HepG2 (cell line): ENCODE measurements at regions of chr5 and their contacts with region 1.

Region 1: GRCh38 chr5:62521319-62521718 is 57.3 kb upstream of the LRRC70 start:
- DNase-seq: no peak
- ATAC-seq: no peak
- H3K4me3 ChIP-seq: no peak overlapping the region
- H3K27ac ChIP-seq: no peak overlapping the region
- H3K4me1 ChIP-seq: no peaks in the 10 kb centered on the region
- H3K27me3 ChIP-seq: no peaks in the 10 kb centered on the region
- CTCF ChIP-seq: no peak
- EP300 ChIP-seq: no peak
- POLR2A ChIP-seq: no peak
- RAD21 ChIP-seq: no peak

Region 2: DNA sequence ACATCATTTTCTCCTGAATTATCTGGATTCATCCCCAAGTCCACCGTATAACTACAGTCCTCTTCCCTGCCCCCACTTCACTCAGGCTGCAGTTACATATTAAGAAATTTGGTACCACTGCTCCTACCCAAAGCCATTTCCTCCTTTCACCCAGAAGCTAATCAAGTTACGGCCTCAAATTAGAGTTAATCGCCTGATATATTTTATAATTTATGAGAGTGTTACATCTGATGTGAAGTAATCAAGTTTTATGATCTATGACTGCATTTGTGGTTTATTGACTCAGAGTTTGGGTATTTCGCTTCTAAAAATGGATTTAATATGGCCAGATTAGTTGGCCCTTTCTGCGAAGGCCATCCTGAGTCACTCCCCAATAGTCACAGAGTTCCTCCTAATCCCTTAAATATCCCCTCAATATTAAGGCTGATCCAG is 438.9 kb before region 1 on chr5:
- CTCF ChIA-PET with region 1: no interaction called
- POLR2A ChIA-PET with region 1: no interaction called
- in situ Hi-C with region 1: no loop called
- intact Hi-C with region 1: no loop called
- DNase-seq: no peak
- ATAC-seq: no peak
- H3K4me3 ChIP-seq: no peak overlapping the region
- H3K27ac ChIP-seq: no peak overlapping the region
- H3K4me1 ChIP-seq: no peaks in the 10 kb centered on the region
- H3K27me3 ChIP-seq: peaks cover 3 to 30% of the 10 kb centered on the region in 2 experiments; a peak in 3 of 5 replicates
- CTCF ChIP-seq: no peak
- EP300 ChIP-seq: no peak
- POLR2A ChIP-seq: no peak
- RAD21 ChIP-seq: no peak

Region 3: DNA sequence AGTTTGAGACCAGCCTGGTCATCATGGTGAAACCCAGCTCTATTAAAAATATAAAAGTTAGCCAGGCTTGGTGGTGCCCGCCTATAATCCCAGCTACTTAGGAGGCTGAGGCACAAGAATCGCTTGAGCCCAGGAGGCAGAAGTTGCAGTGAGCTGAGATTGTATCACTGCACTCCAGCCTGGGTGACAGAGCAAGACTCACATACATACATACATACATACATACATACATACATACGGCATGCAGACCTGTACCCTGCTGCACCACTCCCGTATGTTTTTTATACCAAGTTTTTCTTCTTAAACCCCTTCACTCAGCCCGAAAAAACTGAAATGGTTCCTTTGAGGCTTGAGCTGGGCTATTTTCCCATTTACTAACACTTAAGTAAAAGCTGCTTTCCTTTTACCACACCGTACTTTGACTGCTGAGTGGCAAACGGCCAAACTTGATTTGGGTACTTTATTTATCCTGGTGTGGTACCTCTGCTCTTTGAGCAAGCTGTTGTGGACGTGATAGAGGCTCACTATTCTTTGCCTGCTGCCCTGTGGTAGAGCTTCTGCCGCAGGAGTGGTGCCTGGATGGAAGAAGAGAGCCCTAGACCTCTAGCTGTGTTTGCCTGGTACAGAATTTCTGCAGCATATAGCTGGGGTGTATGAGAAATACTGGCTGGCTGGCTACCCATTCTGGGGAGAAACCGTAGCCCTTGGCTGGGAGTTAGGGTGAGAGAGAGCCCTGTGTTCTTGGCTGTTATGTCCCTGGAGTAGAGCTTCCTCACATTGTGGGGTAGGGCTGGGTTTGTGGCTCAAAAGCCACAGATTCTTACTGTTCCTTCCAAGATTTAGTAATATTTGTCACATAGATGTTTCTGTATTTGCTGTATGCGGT is 89.3 kb before region 1 on chr5:
- CTCF ChIA-PET with region 1: no interaction called
- POLR2A ChIA-PET with region 1: no interaction called
- in situ Hi-C with region 1: no loop called
- intact Hi-C with region 1: no loop called
- DNase-seq: no peak
- ATAC-seq: no peak
- H3K4me3 ChIP-seq: no peak overlapping the region
- H3K27ac ChIP-seq: no peak overlapping the region
- H3K4me1 ChIP-seq: no peaks in the 10 kb centered on the region
- H3K27me3 ChIP-seq: no peaks in the 10 kb centered on the region
- CTCF ChIP-seq: no peak
- EP300 ChIP-seq: no peak
- POLR2A ChIP-seq: no peak
- RAD21 ChIP-seq: no peak

Region 4: DNA sequence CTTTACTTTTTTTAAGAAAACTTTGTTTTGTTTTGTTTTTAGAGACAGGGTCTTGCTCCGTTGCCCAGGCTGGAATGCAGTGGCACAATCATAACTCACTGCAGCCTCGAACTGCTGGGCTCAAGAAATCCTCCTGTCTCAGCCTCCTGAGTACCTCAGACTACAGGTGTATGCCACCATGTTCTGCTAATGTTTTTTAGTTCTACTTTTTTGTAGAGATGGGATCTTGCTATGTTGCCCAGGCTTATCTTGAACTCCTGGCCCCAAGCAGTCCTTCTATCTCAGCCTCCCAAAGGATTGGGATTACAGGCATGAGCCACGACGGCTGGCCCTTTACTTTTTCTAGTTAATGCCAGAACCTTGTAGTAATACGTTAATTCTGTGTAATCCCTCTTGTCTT is 72.8 kb before region 1 on chr5:
- CTCF ChIA-PET with region 1: no interaction called
- POLR2A ChIA-PET with region 1: no interaction called
- in situ Hi-C with region 1: no loop called
- intact Hi-C with region 1: loop called (anchors 2 kb)
- DNase-seq: no peak
- ATAC-seq: no peak
- H3K4me3 ChIP-seq: no peak overlapping the region
- H3K27ac ChIP-seq: no peak overlapping the region
- H3K4me1 ChIP-seq: no peaks in the 10 kb centered on the region
- H3K27me3 ChIP-seq: no peaks in the 10 kb centered on the region
- CTCF ChIP-seq: no peak
- EP300 ChIP-seq: no peak
- POLR2A ChIP-seq: no peak
- RAD21 ChIP-seq: no peak

Region 5: GRCh38 chr5:62460578-62460983 is 60.7 kb before region 1 on chr5:
- CTCF ChIA-PET with region 1: no interaction called
- POLR2A ChIA-PET with region 1: no interaction called
- in situ Hi-C with region 1: no loop called
- intact Hi-C with region 1: no loop called
- DNase-seq: peak; percentile 35
- ATAC-seq: peak; percentile 76
- H3K4me3 ChIP-seq: no peak overlapping the region
- H3K27ac ChIP-seq: no peak overlapping the region
- H3K4me1 ChIP-seq: no peaks in the 10 kb centered on the region
- H3K27me3 ChIP-seq: no peaks in the 10 kb centered on the region
- CTCF ChIP-seq: peak; percentile 70
- EP300 ChIP-seq: no peak
- POLR2A ChIP-seq: no peak
- RAD21 ChIP-seq: no peak